ENCODE measurements at regions of chr3 and their contacts with region 1.

Region 1: GRCh38 chr3:195894780-195895607 is 13.4 kb downstream of the TNK2 start:
- DNase-seq: peak; percentile 82
- ATAC-seq: peak; percentile 77
- H3K4me3 Mint-ChIP-seq: peak overlapping the region; percentile 81
- H3K27ac Mint-ChIP-seq: peak overlapping the region; percentile 87
- H3K4me1 Mint-ChIP-seq: peaks cover 40% of the 10 kb centered on the region
- H3K27me3 Mint-ChIP-seq: no peaks in the 10 kb centered on the region

Region 2: DNA sequence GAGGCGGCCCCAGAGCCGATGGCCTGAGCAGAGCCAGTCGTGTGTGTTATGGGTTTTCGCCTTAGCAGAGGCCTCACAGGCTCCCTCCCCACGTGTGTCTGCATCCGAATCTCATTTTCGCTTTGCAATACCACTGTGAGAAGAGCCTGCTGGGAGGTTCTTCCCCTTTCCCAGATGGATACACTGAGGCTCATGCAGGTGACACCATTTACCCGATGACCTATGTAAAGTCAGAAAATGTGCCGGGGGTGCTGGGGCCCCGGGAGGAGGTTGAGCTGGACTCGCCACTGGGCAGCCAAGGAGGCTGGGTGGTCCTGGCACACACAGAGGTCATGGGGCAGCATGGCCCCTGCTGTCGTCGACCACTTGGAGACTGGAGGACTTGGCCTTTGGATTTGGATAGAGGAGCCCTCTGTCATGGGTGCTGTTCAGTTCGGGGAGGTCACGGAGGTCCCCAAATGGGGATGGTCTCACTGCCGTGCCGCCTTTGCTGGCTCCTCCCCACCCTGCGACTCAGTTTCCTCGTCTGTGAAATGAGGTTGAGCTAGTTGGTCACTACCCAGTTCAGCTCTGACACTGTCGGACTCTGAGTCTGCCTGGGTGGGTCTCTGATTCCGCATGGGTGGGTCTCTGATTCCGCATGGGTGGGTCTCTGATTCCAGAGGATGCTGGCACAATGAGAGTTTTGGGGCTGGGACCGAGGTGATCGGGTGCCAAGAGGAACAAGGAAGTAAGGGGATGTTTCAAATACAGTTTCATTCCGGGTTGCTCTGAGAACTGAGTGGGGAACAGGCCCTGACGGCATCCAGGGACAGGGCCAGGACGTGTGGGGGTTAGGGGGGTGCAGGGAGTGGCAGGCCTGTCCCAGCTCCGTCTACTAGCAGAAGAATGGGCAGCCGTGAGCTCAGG is 60.1 kb before region 1 on chr3:
- CTCF ChIA-PET with region 1: no interaction called
- DNase-seq: no peak
- ATAC-seq: no peak
- H3K4me3 Mint-ChIP-seq: no peak overlapping the region
- H3K27ac Mint-ChIP-seq: no peak overlapping the region
- H3K4me1 Mint-ChIP-seq: no peaks in the 10 kb centered on the region
- H3K27me3 Mint-ChIP-seq: peaks cover 6% of the 10 kb centered on the region

Region 3: GRCh38 chr3:195863121-195864006 is 31.6 kb before region 1 on chr3:
- CTCF ChIA-PET with region 1: interaction called, 192 read pairs
- DNase-seq: peak; percentile 72
- ATAC-seq: peak; percentile 72
- H3K4me3 Mint-ChIP-seq: no peak overlapping the region
- H3K27ac Mint-ChIP-seq: no peak overlapping the region
- H3K4me1 Mint-ChIP-seq: peaks cover 4% of the 10 kb centered on the region
- H3K27me3 Mint-ChIP-seq: no peaks in the 10 kb centered on the region

Region 4: GRCh38 chr3:195921334-195921791 is 26.4 kb after region 1 on chr3:
- CTCF ChIA-PET with region 1: interaction called, 129 read pairs
- DNase-seq: no peak
- ATAC-seq: no peak
- H3K4me3 Mint-ChIP-seq: no peak overlapping the region
- H3K27ac Mint-ChIP-seq: no peak overlapping the region
- H3K4me1 Mint-ChIP-seq: no peaks in the 10 kb centered on the region
- H3K27me3 Mint-ChIP-seq: peaks cover 4% of the 10 kb centered on the region